Naive thymus-derived CD4-positive, alpha-beta T cell (primary cell): ENCODE measurements at regions of chr1 and their contacts with region 1.

Region 1: GRCh38 chr1:171313835-171314320 is at the start of gene FMO4:
- DNase-seq: peak; percentile 35 to 94 (median 90)
- ATAC-seq: peak; percentile 100
- H3K4me3 ChIP-seq: peak within 1 kb of the TSS; percentile 26
- H3K4me3 Mint-ChIP-seq: peak within 1 kb of the TSS; percentile 35 to 86 (median 81)
- H3K27ac ChIP-seq: peak within 1 kb of the TSS; percentile 56
- H3K27ac Mint-ChIP-seq: peak within 1 kb of the TSS; percentile 73 to 96 (median 90)
- H3K4me1 ChIP-seq: peaks cover 5 to 7% of the 10 kb centered on the region in 2 donors
- H3K4me1 Mint-ChIP-seq: peaks cover 4 to 34% (median 26%) of the 10 kb centered on the region in 7 donors
- H3K27me3 ChIP-seq: no peaks in the 10 kb centered on the region
- H3K27me3 Mint-ChIP-seq: no peaks in the 10 kb centered on the region
- total RNA-seq, gene FMO4: 1.2 to 3.7 (median 3.3) TPM

Region 2: DNA sequence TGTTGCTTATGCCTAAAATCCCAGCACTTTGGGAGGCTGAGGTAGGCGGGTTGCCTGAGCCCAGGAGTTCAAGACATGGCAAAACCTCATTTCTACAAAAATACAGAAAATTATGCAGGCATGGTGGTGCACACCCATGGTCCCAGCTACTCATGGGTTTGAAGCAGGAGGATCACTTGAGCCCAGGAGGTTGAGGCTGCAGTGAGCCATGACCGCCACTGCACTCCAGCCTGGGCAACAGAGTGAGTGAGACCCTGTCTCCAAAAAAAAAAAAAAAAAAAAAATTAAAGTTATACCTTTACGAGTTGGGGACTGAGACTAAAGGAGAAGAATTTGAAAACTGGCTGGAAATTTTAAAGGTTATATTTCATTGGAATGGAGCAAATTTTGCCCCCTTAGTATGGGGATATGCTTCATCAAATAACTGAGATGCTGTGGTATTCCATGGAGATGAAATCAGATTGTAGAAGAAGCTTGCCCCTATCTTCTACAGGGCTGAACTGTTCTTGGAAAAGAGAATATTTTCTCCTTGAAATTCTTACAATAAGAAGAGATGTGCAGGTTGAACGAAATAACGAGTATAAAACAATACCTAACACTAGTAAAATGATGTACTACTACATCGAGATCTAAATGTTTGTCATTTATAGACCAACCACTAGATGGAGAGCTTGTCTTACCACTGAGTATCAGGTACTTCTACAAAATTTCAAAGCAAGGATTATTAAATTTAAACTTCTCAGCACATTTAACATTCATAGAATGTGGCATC is 1385.3 kb before region 1 on chr1:
- CTCF ChIA-PET with region 1: no interaction called
- POLR2A ChIA-PET with region 1: no interaction called
- intact Hi-C with region 1: loop called in 1 of 2 experiments (anchors 1 kb)
- DNase-seq: peak in 7 of 9 donors; percentile 12 to 61 (median 44)
- ATAC-seq: peak; percentile 78
- H3K4me3 ChIP-seq: no peak overlapping the region
- H3K4me3 Mint-ChIP-seq: no peak overlapping the region
- H3K27ac ChIP-seq: no peak overlapping the region
- H3K27ac Mint-ChIP-seq: peak overlapping the region in 1 of 9 donors; percentile 36
- H3K4me1 ChIP-seq: no peaks in the 10 kb centered on the region
- H3K4me1 Mint-ChIP-seq: peaks cover 3 to 6% (median 5%) of the 10 kb centered on the region in 7 donors
- H3K27me3 ChIP-seq: no peaks in the 10 kb centered on the region
- H3K27me3 Mint-ChIP-seq: no peaks in the 10 kb centered on the region

Region 3: GRCh38 chr1:170531758-170532657 is 781.9 kb before region 1 on chr1 and contains the start of gene GORAB:
- CTCF ChIA-PET with region 1: no interaction called
- POLR2A ChIA-PET with region 1: no interaction called
- intact Hi-C with region 1: loop called (anchors 1 to 5 kb)
- DNase-seq: peak; percentile 74 to 87 (median 83)
- ATAC-seq: peak; percentile 97
- H3K4me3 ChIP-seq: peak within 1 kb of the TSS; percentile 95
- H3K4me3 Mint-ChIP-seq: no peak within 1 kb of the TSS
- H3K27ac ChIP-seq: peak within 1 kb of the TSS; percentile 91
- H3K27ac Mint-ChIP-seq: peak within 1 kb of the TSS in 1 of 9 donors; percentile 36
- H3K4me1 ChIP-seq: peaks cover 8 to 14% of the 10 kb centered on the region in 2 donors
- H3K4me1 Mint-ChIP-seq: peaks cover 7 to 29% (median 19%) of the 10 kb centered on the region in 7 donors
- H3K27me3 ChIP-seq: no peaks in the 10 kb centered on the region
- H3K27me3 Mint-ChIP-seq: peaks cover 0 to 20% (median 0%) of the 10 kb centered on the region in 5 donors
- total RNA-seq, gene GORAB: 10.9 to 25.3 (median 22.7) TPM

Region 4: DNA sequence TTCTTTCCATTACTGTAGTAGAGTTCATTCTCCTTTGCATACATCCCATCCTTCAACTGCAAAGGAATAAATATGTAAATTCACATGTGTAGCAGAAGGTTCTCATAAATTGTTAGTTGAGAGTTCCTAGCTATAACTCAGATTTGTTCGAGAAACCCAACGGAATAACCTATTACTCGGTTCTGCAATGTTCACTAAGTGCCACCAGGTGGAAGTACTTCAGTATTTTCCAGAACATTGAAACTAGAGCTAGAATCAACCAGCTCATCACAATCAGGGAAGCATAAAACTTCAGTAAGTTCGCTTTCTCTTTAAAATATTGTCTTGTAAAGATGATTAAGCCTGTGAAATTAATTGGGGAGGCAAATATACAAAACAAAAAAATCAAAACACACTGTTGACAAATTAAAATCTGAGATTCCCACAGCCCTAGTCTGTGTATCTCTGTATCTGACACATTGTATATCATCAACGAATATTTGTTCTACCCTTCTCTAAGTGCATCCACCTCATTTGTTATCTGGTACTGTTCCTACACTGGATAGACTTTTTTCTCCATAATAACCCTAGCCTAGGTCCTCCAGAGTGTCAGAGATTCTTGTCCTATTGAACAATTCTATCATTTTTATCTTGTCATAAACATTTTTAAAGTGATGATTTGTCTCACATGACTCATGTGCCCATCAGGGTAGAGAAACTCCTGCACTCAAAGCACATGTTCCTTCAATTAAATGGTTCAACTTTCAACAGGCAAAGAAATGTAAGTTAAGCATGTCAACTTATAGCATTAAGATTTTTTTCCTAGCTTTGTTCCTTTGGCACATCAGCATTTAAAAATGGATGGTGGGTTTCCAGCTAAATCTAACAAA is 346.6 kb before region 1 on chr1:
- CTCF ChIA-PET with region 1: interaction called, 35 read pairs
- POLR2A ChIA-PET with region 1: interaction called, 3 read pairs
- intact Hi-C with region 1: loop called in 1 of 2 experiments (anchors 2 kb)
- DNase-seq: peak in 2 of 9 donors; percentile 7 to 19
- ATAC-seq: no peak
- H3K4me3 ChIP-seq: no peak overlapping the region
- H3K4me3 Mint-ChIP-seq: no peak overlapping the region
- H3K27ac ChIP-seq: no peak overlapping the region
- H3K27ac Mint-ChIP-seq: no peak overlapping the region
- H3K4me1 ChIP-seq: no peaks in the 10 kb centered on the region
- H3K4me1 Mint-ChIP-seq: no peaks in the 10 kb centered on the region
- H3K27me3 ChIP-seq: no peaks in the 10 kb centered on the region
- H3K27me3 Mint-ChIP-seq: peaks cover 9 to 49% (median 25%) of the 10 kb centered on the region in 5 donors

Region 5: DNA sequence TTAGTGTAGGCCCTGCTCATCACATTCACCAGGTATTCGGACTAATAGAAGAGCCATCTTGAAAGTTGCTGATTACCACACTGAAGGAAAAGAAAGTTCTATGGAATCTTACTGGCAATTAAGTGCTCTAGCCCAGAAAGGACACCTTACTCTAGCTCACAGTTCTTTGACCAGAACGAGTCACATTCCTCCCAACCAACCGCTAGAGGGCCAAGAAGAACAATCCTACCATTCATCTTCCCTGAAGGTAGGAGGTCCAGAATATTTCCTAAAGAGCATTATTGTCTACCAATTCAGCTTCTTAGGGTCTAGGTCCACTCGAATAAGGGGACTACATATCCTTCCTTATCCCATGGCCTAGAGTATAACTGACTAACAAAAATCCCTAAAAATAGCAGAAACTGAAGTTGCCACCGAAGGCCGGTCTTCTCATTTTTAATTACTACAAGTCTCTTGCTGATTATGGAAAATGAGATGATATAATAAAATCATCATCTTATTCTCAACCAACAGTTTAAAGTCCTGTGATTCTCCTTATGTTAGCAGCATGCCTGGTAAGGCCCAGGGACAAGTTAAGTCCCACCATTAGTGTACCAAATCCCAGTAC is 68.3 kb before region 1 on chr1:
- CTCF ChIA-PET with region 1: interaction called, 37 read pairs
- POLR2A ChIA-PET with region 1: interaction called, 3 read pairs
- intact Hi-C with region 1: loop called (anchors 1 kb)
- DNase-seq: peak in 4 of 9 donors; percentile 8 to 25 (median 15)
- ATAC-seq: peak; percentile 60
- H3K4me3 ChIP-seq: no peak overlapping the region
- H3K4me3 Mint-ChIP-seq: no peak overlapping the region
- H3K27ac ChIP-seq: no peak overlapping the region
- H3K27ac Mint-ChIP-seq: peak overlapping the region in 1 of 9 donors; percentile 28
- H3K4me1 ChIP-seq: no peaks in the 10 kb centered on the region
- H3K4me1 Mint-ChIP-seq: no peaks in the 10 kb centered on the region
- H3K27me3 ChIP-seq: peaks cover 0 to 4% of the 10 kb centered on the region in 2 donors
- H3K27me3 Mint-ChIP-seq: peaks cover 16 to 49% (median 31%) of the 10 kb centered on the region in 5 donors

Region 6: DNA sequence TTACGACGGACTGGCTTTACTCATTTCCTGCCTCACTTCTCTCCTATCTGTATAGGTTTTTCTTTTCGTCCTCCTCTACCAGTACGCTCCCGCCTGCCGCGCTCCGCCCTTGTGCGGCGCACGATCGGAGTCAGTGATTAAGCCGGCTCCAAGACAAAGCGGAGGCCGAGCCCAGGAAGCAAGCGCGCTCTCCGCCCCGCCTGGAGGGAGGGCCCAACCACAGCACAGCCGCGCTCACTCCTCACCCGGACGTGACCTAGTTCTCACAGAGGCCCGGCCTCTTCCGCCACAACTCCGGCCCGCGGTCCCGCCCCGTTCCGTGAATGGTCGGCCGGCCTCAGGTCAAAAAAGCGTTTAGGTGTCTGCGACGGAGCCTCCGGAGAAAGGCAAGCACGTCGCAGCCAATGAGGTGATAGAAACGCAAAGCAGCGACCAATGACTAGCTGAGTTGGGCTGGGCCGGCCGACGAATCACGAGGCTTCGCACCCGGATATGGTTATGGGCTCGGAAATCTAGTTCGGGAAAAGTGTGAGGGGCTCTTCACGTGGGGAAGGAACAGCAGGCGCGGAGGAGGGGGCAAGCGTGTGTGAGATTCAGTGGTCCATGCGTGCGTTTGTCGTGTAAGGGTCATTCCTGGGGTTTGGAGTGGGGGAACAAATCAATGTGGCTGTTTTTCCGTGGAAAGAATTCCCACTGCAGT is 467.4 kb after region 1 on chr1 and contains the start of gene METTL13:
- CTCF ChIA-PET with region 1: no interaction called
- POLR2A ChIA-PET with region 1: interaction called, 3 read pairs
- intact Hi-C with region 1: loop called in 1 of 2 experiments (anchors 1 kb)
- DNase-seq: peak; percentile 89 to 100 (median 99)
- ATAC-seq: peak; percentile 95
- H3K4me3 ChIP-seq: peak within 1 kb of the TSS; percentile 95
- H3K4me3 Mint-ChIP-seq: peak within 1 kb of the TSS; percentile 90 to 99 (median 94)
- H3K27ac ChIP-seq: peak within 1 kb of the TSS; percentile 74
- H3K27ac Mint-ChIP-seq: peak within 1 kb of the TSS; percentile 93 to 99 (median 96)
- H3K4me1 ChIP-seq: peaks cover 20 to 41% of the 10 kb centered on the region in 2 donors
- H3K4me1 Mint-ChIP-seq: peaks cover 28 to 65% (median 58%) of the 10 kb centered on the region in 7 donors
- H3K27me3 ChIP-seq: no peaks in the 10 kb centered on the region
- H3K27me3 Mint-ChIP-seq: no peaks in the 10 kb centered on the region
- total RNA-seq, gene METTL13: 15.6 to 50.7 (median 34.5) TPM